Ovary (tissue), 10 donors: ENCODE measurements at regions of chr10 and their contacts with region 1.

Region 1: GRCh38 chr10:27742195-27743011 is 3.2 kb downstream of the MKX start:
- DNase-seq: peak; percentile 82 to 92 (median 87)
- H3K4me3 ChIP-seq: peak overlapping the region; percentile 75
- H3K27ac ChIP-seq: peak overlapping the region; percentile 96 to 98
- H3K4me1 ChIP-seq: no peaks in the 10 kb centered on the region
- H3K27me3 ChIP-seq: no peaks in the 10 kb centered on the region
- CTCF ChIP-seq: peak; percentile 81 to 84 (median 83)
- EP300 ChIP-seq: no peak
- POLR2A ChIP-seq: peak; percentile 69

Region 2: GRCh38 chr10:27558612-27559020 is 183.8 kb before region 1 on chr10:
- intact Hi-C with region 1: loop called in 1 of 4 experiments (anchors 10 kb)
- DNase-seq: peak; percentile 51 to 70 (median 60)
- H3K4me3 ChIP-seq: no peak overlapping the region
- H3K27ac ChIP-seq: no peak overlapping the region
- H3K4me1 ChIP-seq: no peaks in the 10 kb centered on the region
- H3K27me3 ChIP-seq: no peaks in the 10 kb centered on the region
- CTCF ChIP-seq: peak; percentile 68 to 76 (median 73)
- EP300 ChIP-seq: no peak
- POLR2A ChIP-seq: no peak

Region 3: GRCh38 chr10:27724287-27724686 is 18.1 kb before region 1 on chr10:
- intact Hi-C with region 1: no loop called
- DNase-seq: no peak
- H3K4me3 ChIP-seq: no peak overlapping the region
- H3K27ac ChIP-seq: peak overlapping the region in 1 of 2 donors; percentile 78
- H3K4me1 ChIP-seq: peaks cover 3% of the 10 kb centered on the region
- H3K27me3 ChIP-seq: no peaks in the 10 kb centered on the region
- CTCF ChIP-seq: no peak
- EP300 ChIP-seq: no peak
- POLR2A ChIP-seq: no peak

Region 4: GRCh38 chr10:27801171-27801785 is 58.9 kb after region 1 on chr10:
- intact Hi-C with region 1: no loop called
- DNase-seq: no peak
- H3K4me3 ChIP-seq: no peak overlapping the region
- H3K27ac ChIP-seq: no peak overlapping the region
- H3K4me1 ChIP-seq: peaks cover 7% of the 10 kb centered on the region
- H3K27me3 ChIP-seq: no peaks in the 10 kb centered on the region
- CTCF ChIP-seq: no peak
- EP300 ChIP-seq: no peak
- POLR2A ChIP-seq: no peak

Region 5: DNA sequence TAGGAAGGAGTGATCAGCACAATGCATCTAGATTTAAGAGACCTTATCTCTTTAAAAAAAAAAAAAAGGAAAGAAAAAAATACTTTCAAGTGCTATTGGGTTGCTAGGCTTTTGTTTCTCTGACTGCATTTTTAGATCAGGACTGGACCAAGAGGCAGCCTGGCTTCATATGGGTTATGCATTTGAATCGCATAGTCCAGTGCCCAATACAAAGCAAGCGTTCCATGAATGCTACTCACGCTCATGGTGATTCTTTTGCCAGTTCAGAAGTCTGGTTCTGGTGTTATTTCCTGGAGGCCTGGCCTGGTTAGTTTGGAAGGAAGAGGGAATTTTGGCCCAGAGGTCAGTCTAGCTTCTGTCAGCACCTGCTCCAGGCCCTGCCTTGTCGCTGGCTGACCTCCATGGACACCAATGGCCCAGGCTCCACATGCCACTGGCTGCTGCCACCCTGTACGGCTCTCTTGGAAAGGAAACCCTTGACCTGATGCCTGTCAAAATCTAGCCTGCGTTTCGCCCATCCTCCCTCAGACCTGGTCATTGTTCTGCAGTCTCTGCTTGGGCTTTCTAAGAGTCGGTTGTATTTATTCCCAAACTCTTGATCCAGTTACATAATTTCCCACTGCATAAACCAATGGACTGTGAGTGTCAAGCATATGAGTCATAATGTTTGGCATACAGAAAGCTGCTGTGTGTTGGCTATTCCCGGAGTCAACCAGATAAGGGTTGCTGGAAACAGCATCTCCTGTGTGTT is 77.6 kb after region 1 on chr10:
- intact Hi-C with region 1: loop called in 2 of 4 experiments (anchors 10 kb)
- DNase-seq: peak; percentile 43 to 68 (median 59)
- H3K4me3 ChIP-seq: no peak overlapping the region
- H3K27ac ChIP-seq: peak overlapping the region in 1 of 2 donors; percentile 48
- H3K4me1 ChIP-seq: peaks cover 10% of the 10 kb centered on the region
- H3K27me3 ChIP-seq: no peaks in the 10 kb centered on the region
- CTCF ChIP-seq: no peak
- EP300 ChIP-seq: peak; percentile 4
- POLR2A ChIP-seq: no peak